ENCODE measurements at regions of chr12 and their contacts with region 1.

Region 1: DNA sequence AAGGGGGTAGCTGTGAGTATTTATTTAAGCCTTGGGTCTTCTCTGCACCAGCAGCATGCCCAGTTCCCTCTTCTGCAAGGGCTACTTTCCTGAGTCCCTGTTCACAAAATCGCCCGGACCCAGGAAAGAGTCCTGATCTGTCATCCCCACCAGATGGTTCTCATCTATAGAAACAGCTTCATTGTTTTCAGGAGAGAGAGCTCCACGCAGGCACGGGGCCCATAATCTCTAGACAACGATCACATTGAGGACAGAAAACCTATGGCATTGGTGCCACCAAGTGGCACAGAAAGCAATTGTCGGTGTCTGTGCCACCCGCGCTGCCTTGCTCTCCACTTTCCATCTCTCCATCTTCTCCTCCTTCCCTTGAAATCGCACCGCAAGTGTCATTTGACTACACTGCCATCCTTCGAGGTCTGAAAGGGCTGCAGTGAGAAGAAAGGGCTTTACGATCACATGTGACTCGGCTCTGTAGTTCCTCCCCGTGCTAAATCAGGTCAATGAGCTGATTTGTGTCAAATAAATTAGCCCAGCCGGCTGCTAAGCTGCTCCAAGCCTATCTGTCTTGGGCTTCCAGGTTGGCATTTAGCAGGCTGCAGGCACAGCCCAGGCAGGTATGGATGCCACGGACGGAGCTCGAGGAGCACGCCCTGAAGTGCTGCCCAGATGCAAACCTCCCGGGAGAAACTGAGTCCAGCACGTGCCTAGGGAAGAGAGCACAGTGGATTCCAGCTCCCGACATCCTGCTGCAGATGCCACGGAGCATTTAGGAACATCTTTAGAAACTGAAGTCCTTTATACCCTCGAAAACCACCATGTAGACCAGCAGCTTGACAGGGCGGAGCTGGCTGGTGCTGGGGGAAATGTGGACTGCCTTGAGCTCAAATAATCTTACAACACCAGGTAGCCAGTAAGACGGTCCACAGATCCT is 28.8 kb downstream of the SPRING1 start:
- DNase-seq: peak; percentile 38
- ATAC-seq: peak; percentile 96
- H3K4me3 ChIP-seq: peak overlapping the region in 1 of 2 experiments; percentile 16; a peak in 1 of 4 replicates
- H3K27ac ChIP-seq: no peak overlapping the region
- H3K4me1 ChIP-seq: peaks cover 0 to 12% of the 10 kb centered on the region in 2 experiments; a peak in 3 of 4 replicates
- H3K27me3 ChIP-seq: no peaks in the 10 kb centered on the region
- CTCF ChIP-seq: peak; percentile 65 to 72 (median 72); a peak in 5 of 6 replicates
- POLR2A ChIP-seq: no peak
- RAD21 ChIP-seq: peak; percentile 88

Region 2: DNA sequence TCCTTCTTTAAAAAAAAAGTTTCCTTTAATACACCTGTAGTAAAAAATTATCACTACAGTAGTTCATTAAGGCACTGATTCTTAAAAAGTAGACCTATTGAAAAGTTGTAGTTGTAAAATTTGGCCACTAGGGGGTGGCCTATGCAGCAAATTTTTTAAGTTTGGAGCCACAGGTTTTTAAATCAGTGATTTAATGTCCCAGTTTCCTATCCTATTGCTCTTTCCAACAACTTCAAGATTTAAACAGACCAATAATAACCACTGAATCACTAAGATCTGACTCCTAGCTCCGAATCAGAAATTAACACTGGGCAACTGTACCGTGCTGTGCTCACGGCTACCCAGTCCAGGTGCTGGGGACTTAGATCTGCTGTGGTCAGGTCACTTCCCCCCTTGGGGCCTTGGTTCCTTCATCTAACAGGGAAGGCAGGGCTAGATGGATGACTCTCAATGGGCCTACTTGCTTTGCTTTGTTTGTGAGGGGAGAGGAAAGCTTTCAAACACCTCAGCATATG is 710.9 kb before region 1 on chr12:
- CTCF ChIA-PET with region 1: interaction called, 3 read pairs
- POLR2A ChIA-PET with region 1: no interaction called
- RAD21 ChIA-PET with region 1: no interaction called
- intact Hi-C with region 1: loop called (anchors 5 kb)
- DNase-seq: peak; percentile 32
- ATAC-seq: peak; percentile 69
- H3K4me3 ChIP-seq: no peak overlapping the region
- H3K27ac ChIP-seq: peak overlapping the region; percentile 14; the same call in 1 of the 2 replicates
- H3K4me1 ChIP-seq: peaks cover 0 to 9% of the 10 kb centered on the region in 2 experiments; a peak in 1 of 4 replicates
- H3K27me3 ChIP-seq: no peaks in the 10 kb centered on the region
- CTCF ChIP-seq: peak; percentile 48 to 82 (median 68); a peak in 5 of 6 replicates
- POLR2A ChIP-seq: no peak
- RAD21 ChIP-seq: peak; percentile 61

Region 3: GRCh38 chr12:116882742-116883141 is 173.7 kb after region 1 on chr12:
- CTCF ChIA-PET with region 1: interaction called, 17 read pairs
- POLR2A ChIA-PET with region 1: no interaction called
- RAD21 ChIA-PET with region 1: interaction called in 1 of 2 experiments, 3 read pairs
- intact Hi-C with region 1: no loop called
- DNase-seq: no peak
- ATAC-seq: no peak
- H3K4me3 ChIP-seq: no peak overlapping the region
- H3K27ac ChIP-seq: no peak overlapping the region
- H3K4me1 ChIP-seq: peaks cover 14 to 32% of the 10 kb centered on the region in 2 experiments; a peak in 3 of 4 replicates
- H3K27me3 ChIP-seq: no peaks in the 10 kb centered on the region
- CTCF ChIP-seq: peak in 2 of 3 experiments; percentile 43 to 74; a peak in 4 of 6 replicates
- POLR2A ChIP-seq: no peak
- RAD21 ChIP-seq: peak; percentile 83

Region 4: GRCh38 chr12:116955382-116956021 is 246.4 kb after region 1 on chr12:
- CTCF ChIA-PET with region 1: interaction called, 18 read pairs
- POLR2A ChIA-PET with region 1: no interaction called
- RAD21 ChIA-PET with region 1: no interaction called
- intact Hi-C with region 1: no loop called
- DNase-seq: peak; percentile 45
- ATAC-seq: peak; percentile 69
- H3K4me3 ChIP-seq: no peak overlapping the region
- H3K27ac ChIP-seq: no peak overlapping the region
- H3K4me1 ChIP-seq: no peaks in the 10 kb centered on the region; a peak in 1 of 4 replicates
- H3K27me3 ChIP-seq: no peaks in the 10 kb centered on the region
- CTCF ChIP-seq: peak; percentile 12 to 53 (median 33); a peak in 3 of 6 replicates
- POLR2A ChIP-seq: no peak
- RAD21 ChIP-seq: peak; percentile 82

Measured in HCT116 (cell line).